HAP-1 (cell line): ENCODE measurements at regions of chr20 and their contacts with region 1.

Region 1: GRCh38 chr20:9467995-9468394 is 46.4 kb upstream of the LAMP5 start:
- DNase-seq: peak in 1 of 2 experiments; percentile 40
- H3K4me3 ChIP-seq: no peak overlapping the region
- H3K4me1 ChIP-seq: no peaks in the 10 kb centered on the region
- H3K27me3 ChIP-seq: no peaks in the 10 kb centered on the region

Region 2: GRCh38 chr20:9270831-9271230 is 197.2 kb before region 1 on chr20:
- in situ Hi-C with region 1: no loop called
- DNase-seq: no peak
- H3K4me3 ChIP-seq: no peak overlapping the region
- H3K4me1 ChIP-seq: no peaks in the 10 kb centered on the region
- H3K27me3 ChIP-seq: no peaks in the 10 kb centered on the region

Region 3: DNA sequence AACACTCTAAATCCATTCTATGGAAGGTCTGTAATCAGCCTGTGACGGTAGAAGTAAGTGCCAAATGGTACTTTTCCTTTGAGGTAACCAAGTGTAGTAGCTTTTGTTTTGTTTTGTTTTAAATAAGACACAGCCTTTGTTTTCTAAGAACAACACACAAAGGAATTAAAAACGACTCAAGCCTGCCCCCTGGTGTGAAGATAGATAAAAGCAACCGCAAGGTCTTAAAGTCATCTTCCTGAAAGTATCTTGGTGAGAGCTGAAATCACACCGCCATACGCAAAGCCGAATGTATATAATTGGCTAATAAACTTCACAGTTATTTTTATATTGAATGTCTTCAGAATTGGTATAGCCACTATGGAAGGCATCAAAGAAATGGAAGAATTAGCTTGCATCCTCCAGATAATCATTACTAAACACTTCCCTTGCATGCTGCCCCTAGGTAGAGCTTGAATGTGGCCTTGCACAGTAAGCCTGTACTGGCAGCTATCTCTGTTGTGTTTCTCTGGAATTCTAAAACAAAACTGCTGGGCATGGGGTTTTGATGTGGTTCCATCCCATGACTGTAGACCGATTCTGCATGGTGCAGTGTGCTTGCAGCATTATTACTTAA is 142.0 kb after region 1 on chr20:
- in situ Hi-C with region 1: loop called (anchors 10 kb)
- DNase-seq: peak; percentile 57 to 84
- H3K4me3 ChIP-seq: no peak overlapping the region
- H3K4me1 ChIP-seq: no peaks in the 10 kb centered on the region
- H3K27me3 ChIP-seq: no peaks in the 10 kb centered on the region

Region 4: GRCh38 chr20:9736373-9736772 is 268.4 kb after region 1 on chr20:
- in situ Hi-C with region 1: no loop called
- DNase-seq: no peak
- H3K4me3 ChIP-seq: no peak overlapping the region
- H3K4me1 ChIP-seq: no peaks in the 10 kb centered on the region
- H3K27me3 ChIP-seq: no peaks in the 10 kb centered on the region